ENCODE measurements at regions of chr12 and their contacts with region 1.

Region 1: DNA sequence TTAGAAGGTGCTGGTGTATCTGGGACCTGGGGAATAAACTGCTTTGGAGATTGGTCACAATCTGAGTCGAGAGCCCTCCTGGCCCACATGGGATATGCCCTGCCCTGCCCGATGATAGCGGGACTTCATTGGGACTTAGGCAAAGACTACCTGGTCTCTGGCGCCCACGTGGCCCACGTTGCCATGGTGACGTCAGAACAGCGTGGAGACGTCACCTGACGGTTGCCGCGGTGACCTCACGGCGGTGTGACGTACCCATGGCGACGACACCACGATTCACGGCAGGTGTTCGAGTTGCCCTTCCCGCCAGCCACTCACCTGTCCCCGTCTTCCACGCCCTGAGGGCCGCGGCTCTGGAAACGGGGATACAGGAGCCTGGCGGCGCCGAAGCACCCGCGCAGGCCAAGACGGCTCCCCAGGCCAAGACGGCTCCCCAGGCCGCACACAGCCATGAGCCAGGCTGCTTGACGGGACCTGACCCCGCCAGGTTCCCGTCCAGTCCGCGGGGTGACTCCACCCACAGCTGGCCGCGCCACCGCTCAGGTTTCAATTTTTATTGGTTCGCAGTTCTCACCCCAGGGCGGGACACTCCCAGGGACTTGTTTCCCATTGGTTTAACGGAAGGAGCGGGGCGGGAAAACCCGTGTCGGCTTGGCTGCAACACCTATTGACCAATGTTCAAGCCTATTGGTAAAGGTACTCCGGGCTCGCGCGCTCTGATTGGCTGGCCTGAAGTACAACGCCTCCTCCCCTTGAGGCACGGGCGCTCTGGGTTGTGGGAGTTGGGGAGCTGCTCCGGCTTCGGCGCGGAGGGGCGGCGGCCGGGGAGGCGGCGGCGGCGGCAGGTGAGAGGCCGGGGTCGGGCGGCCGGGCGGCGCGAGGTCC is at the starts of genes MMAB and MVK:
- DNase-seq: peak; percentile 89 to 100 (median 99)
- ATAC-seq: peak; percentile 93 to 94
- H3K4me3 Mint-ChIP-seq: peak within 1 kb of the TSS; percentile 86 to 99 (median 94)
- H3K27ac Mint-ChIP-seq: peak within 1 kb of the TSS; percentile 86 to 99 (median 98)
- H3K4me1 Mint-ChIP-seq: peaks cover 16 to 34% (median 28%) of the 10 kb centered on the region in 4 donors
- H3K27me3 Mint-ChIP-seq: no peaks in the 10 kb centered on the region
- polyA plus RNA-seq, gene MMAB: 28.2 to 39.1 (median 36.0) TPM
- polyA plus RNA-seq, gene MVK: 2.6 to 3.6 (median 2.7) TPM

Region 2: GRCh38 chr12:109477185-109477962 is 95.9 kb before region 1 on chr12 and contains the starts of genes KCTD10 and UBE3B:
- POLR2A ChIA-PET with region 1: interaction called, 12 read pairs
- DNase-seq: peak; percentile 74 to 96 (median 85)
- ATAC-seq: peak; percentile 93 to 94
- H3K4me3 Mint-ChIP-seq: peak within 1 kb of the TSS; percentile 94 to 99 (median 98)
- H3K27ac Mint-ChIP-seq: peak within 1 kb of the TSS; percentile 97 to 99 (median 99)
- H3K4me1 Mint-ChIP-seq: peaks cover 17 to 53% (median 52%) of the 10 kb centered on the region in 4 donors
- H3K27me3 Mint-ChIP-seq: no peaks in the 10 kb centered on the region
- polyA plus RNA-seq, gene KCTD10: 16.3 to 21.6 (median 20.0) TPM
- polyA plus RNA-seq, gene UBE3B: 14.0 to 19.4 (median 17.1) TPM

Region 3: DNA sequence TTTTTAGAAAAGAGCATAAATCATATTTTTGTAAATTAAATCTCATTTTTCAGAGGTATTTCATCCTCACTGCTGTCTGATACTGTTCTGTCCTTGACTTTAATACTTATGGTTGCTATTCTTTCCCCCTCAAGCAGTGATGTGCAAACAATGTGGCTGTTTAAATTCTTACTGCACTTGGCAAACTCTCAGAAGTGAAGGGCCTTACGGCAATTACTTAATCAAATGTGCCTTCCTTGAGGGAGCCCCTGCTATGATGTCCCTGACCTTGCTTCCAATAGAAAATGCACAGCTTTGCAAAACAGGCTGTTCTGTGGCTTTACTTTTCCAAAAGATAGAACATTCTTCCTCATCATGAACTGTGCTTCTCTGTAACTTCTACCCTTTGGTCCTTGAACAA is 60.7 kb before region 1 on chr12:
- POLR2A ChIA-PET with region 1: no interaction called
- DNase-seq: no peak
- ATAC-seq: no peak
- H3K4me3 Mint-ChIP-seq: no peak overlapping the region
- H3K27ac Mint-ChIP-seq: no peak overlapping the region
- H3K4me1 Mint-ChIP-seq: peaks cover 0 to 2% (median 0%) of the 10 kb centered on the region in 4 donors
- H3K27me3 Mint-ChIP-seq: no peaks in the 10 kb centered on the region

Region 4: GRCh38 chr12:109544955-109545531 is 28.2 kb before region 1 on chr12:
- POLR2A ChIA-PET with region 1: no interaction called
- DNase-seq: peak in 1 of 10 donors; percentile 6
- ATAC-seq: no peak
- H3K4me3 Mint-ChIP-seq: peak overlapping the region in 2 of 10 donors; percentile 17 to 69
- H3K27ac Mint-ChIP-seq: peak overlapping the region in 2 of 10 donors; percentile 42 to 76
- H3K4me1 Mint-ChIP-seq: peaks cover 4 to 37% (median 9%) of the 10 kb centered on the region in 4 donors
- H3K27me3 Mint-ChIP-seq: peaks cover 7 to 31% (median 10%) of the 10 kb centered on the region in 5 donors

Region 5: DNA sequence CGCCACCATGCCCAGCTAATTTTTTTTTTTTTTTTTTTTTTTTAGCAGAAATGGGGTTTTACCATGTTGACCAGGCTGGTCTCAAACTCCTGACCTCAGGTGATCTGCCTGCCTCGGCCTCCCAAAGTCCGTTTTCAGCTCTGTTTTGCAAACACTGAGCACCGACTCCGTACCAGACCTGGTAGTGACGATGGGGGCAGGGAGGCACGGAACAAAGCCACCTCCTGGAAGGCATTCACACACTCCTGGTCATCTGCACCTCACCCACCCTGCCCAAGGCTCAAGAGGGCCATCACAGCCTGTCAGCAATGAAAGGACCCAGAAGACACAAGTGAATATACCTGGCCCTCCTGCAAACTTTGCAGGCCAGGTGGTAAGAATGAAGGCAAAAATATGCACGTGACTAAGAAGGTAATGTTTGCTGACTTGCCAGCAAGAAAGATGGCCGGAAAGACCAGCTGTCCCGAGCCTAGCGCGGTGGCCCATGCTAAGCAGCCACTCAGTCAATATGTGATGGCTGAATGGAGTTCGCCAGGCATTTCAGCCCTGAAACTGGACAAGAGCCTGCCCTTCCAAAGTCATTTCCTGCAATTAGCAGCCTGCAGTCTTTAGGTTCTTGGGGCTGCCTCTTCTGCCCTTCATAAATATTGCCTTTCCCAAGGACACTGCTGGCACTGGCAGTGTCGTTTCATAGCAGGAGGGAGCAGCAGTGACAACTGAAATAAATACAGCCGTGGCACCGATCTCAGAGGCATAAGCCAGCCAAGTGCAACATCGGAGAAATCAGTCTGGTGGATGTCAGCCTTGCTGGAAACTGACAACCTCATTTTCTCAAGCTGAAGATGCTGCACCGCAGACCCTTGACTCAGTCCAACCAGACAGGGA is 17.6 kb before region 1 on chr12:
- POLR2A ChIA-PET with region 1: no interaction called
- DNase-seq: no peak
- ATAC-seq: no peak
- H3K4me3 Mint-ChIP-seq: no peak overlapping the region
- H3K27ac Mint-ChIP-seq: peak overlapping the region in 1 of 10 donors; percentile 65
- H3K4me1 Mint-ChIP-seq: no peaks in the 10 kb centered on the region
- H3K27me3 Mint-ChIP-seq: no peaks in the 10 kb centered on the region

Region 6: GRCh38 chr12:109625131-109625559 is 51.9 kb after region 1 on chr12:
- POLR2A ChIA-PET with region 1: no interaction called
- DNase-seq: no peak
- ATAC-seq: no peak
- H3K4me3 Mint-ChIP-seq: peak overlapping the region in 1 of 10 donors; percentile 51
- H3K27ac Mint-ChIP-seq: no peak overlapping the region
- H3K4me1 Mint-ChIP-seq: peaks cover 4 to 7% (median 5%) of the 10 kb centered on the region in 4 donors
- H3K27me3 Mint-ChIP-seq: peaks cover 17 to 63% (median 33%) of the 10 kb centered on the region in 5 donors

Measured in naive thymus-derived CD8-positive, alpha-beta T cell (primary cell).